Activated B cell treated with CpG ODN at 0.5 μM for 24 hours (primary cell): ENCODE measurements at regions of chr20 and their contacts with region 1.

Region 1: DNA sequence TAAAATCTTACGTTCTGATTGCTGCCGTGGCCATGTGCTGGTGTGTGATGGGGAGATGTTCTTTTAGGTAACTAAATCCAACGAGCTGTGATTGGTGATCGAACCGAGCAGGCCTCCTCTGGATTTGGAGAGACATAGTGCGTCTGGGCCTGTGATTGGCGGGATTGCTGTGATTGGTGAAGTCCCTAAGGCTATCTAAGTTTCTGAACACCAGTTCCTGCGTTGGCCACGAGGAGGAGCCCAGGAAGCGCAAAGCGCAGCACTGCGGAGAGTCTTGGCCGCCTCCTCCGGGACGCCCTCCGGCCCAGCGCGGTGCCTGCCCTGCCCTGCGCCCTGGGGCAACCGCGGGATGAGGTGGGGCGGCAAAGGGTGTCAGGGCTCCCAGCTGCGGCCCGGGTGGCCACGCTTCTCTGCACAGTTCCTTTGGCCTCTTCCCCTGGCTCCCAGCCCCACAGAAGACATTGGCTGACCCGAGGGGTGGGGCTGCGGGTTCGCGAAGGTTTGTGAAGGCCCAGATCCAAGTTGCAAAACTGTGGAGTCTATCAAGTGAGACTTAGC is 33.0 kb downstream of the HNF4A start:
- DNase-seq: peak; percentile 35
- ATAC-seq: peak; percentile 79
- H3K4me3 Mint-ChIP-seq: no peak overlapping the region
- H3K27ac Mint-ChIP-seq: no peak overlapping the region
- H3K4me1 Mint-ChIP-seq: peaks cover 5% of the 10 kb centered on the region
- H3K27me3 Mint-ChIP-seq: peaks cover 24% of the 10 kb centered on the region
- CTCF ChIP-seq: no peak

Region 2: DNA sequence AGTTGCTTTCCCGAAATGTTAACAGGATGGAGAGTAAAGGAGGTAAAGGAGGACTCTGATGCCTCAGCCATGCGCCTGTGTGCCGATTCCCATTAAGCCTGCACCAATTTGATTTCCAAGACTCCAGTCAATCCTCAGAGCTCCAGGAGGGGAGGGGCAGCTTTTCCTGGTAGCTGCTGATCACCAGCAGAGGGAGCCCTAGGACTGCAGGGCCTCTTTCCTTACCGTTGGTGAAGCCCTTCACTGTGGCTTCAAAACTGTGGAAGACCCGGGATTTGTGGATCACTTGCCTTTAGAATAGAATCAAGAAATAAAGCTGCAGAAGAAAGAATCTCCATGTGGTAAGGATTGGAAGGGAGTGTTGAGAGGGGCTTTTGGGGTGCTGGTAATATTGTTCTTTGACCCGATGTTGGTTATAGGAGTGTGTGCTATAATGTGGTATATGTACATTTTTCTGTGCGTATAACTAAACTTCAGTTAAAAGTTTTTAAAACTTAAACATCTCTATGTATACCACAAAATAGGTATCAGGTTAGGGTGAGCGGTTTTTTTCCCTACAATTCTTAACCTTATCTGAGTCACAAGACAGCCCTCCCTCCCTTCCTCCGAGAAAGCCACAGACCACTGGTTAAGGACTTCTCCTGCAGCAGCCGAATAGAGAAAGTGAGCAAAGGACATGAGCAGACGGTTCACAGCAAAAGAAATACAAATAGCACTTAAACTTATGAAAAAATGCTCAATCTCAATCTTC is 171.0 kb before region 1 on chr20:
- CTCF ChIA-PET with region 1: interaction called, 21 read pairs
- POLR2A ChIA-PET with region 1: no interaction called
- intact Hi-C with region 1: loop called (anchors 1 kb)
- DNase-seq: peak; percentile 34
- ATAC-seq: peak; percentile 68
- H3K4me3 Mint-ChIP-seq: peak overlapping the region; percentile 46
- H3K27ac Mint-ChIP-seq: no peak overlapping the region
- H3K4me1 Mint-ChIP-seq: peaks cover 33% of the 10 kb centered on the region
- H3K27me3 Mint-ChIP-seq: no peaks in the 10 kb centered on the region
- CTCF ChIP-seq: peak; percentile 37

Region 3: GRCh38 chr20:44475694-44476560 is 87.4 kb after region 1 on chr20 and contains the start of gene TTPAL:
- CTCF ChIA-PET with region 1: no interaction called
- POLR2A ChIA-PET with region 1: no interaction called
- intact Hi-C with region 1: no loop called
- DNase-seq: peak; percentile 93
- ATAC-seq: peak; percentile 91
- H3K4me3 Mint-ChIP-seq: peak within 1 kb of the TSS; percentile 96
- H3K27ac Mint-ChIP-seq: peak within 1 kb of the TSS; percentile 94
- H3K4me1 Mint-ChIP-seq: peaks cover 40% of the 10 kb centered on the region
- H3K27me3 Mint-ChIP-seq: no peaks in the 10 kb centered on the region
- CTCF ChIP-seq: no peak
- total RNA-seq, gene TTPAL: 27.5 and 27.7 TPM in 2 replicates

Region 4: GRCh38 chr20:44521484-44522481 is 133.2 kb after region 1 on chr20 and contains the start of gene SERINC3:
- CTCF ChIA-PET with region 1: no interaction called
- POLR2A ChIA-PET with region 1: no interaction called
- intact Hi-C with region 1: loop called (anchors 5 kb)
- DNase-seq: peak; percentile 97
- ATAC-seq: peak; percentile 98
- H3K4me3 Mint-ChIP-seq: peak within 1 kb of the TSS; percentile 89
- H3K27ac Mint-ChIP-seq: peak within 1 kb of the TSS; percentile 83
- H3K4me1 Mint-ChIP-seq: peaks cover 44% of the 10 kb centered on the region
- H3K27me3 Mint-ChIP-seq: no peaks in the 10 kb centered on the region
- CTCF ChIP-seq: no peak
- total RNA-seq, gene SERINC3: 38.1 and 41.4 TPM in 2 replicates

Region 5: DNA sequence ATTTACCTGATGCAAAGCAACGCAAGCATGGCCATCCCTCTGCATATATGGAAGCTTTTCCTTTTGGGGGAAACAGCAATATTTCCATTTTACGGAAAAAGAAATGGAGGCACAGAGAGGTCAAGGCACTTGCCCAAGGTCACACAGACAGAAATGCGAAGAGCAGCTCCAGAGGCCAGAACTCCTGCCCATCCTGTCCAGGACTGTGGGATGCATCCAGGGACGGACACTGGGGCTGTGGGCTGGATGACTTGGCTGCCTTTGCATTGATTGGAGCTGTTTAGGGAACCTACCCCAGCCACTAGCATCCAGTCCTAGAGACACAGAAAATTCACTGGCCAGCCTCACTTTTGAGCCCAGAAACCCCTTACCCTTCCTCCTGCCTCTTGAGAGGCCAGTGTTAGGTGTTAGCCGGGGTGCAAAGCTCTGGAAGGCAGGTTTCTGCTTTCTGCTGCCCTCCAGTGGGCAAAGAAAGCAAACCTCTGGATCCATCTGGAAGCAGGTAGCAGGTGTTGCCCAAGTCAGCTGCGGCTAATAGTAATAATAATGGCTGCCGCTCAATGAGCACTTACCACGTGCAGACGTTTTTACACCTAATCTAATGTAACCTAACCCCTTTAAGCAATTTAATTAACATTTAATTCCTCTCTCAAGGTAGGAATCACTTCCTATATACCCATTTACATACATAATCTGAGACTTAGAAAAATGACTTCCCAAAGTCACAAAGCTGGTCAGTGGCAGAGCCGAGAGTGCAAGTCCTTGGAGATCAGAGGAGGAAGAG is 294.9 kb after region 1 on chr20:
- CTCF ChIA-PET with region 1: no interaction called
- POLR2A ChIA-PET with region 1: no interaction called
- intact Hi-C with region 1: loop called (anchors 1 kb)
- DNase-seq: no peak
- ATAC-seq: peak; percentile 37
- H3K4me3 Mint-ChIP-seq: no peak overlapping the region
- H3K27ac Mint-ChIP-seq: no peak overlapping the region
- H3K4me1 Mint-ChIP-seq: peaks cover 2% of the 10 kb centered on the region
- H3K27me3 Mint-ChIP-seq: peaks cover 6% of the 10 kb centered on the region
- CTCF ChIP-seq: no peak

Region 6: GRCh38 chr20:44747166-44748004 is 358.8 kb after region 1 on chr20:
- CTCF ChIA-PET with region 1: interaction called, 4 read pairs
- POLR2A ChIA-PET with region 1: no interaction called
- intact Hi-C with region 1: loop called (anchors 5 kb)
- DNase-seq: peak; percentile 32
- ATAC-seq: no peak
- H3K4me3 Mint-ChIP-seq: peak overlapping the region; percentile 25
- H3K27ac Mint-ChIP-seq: no peak overlapping the region
- H3K4me1 Mint-ChIP-seq: peaks cover 15% of the 10 kb centered on the region
- H3K27me3 Mint-ChIP-seq: peaks cover 36% of the 10 kb centered on the region
- CTCF ChIP-seq: no peak